Activated naive CD4-positive, alpha-beta T cell treated with anti-CD3 and anti-CD28 coated beads for 36 hours (primary cell): ENCODE measurements at regions of chr3 and their contacts with region 1.

Region 1: DNA sequence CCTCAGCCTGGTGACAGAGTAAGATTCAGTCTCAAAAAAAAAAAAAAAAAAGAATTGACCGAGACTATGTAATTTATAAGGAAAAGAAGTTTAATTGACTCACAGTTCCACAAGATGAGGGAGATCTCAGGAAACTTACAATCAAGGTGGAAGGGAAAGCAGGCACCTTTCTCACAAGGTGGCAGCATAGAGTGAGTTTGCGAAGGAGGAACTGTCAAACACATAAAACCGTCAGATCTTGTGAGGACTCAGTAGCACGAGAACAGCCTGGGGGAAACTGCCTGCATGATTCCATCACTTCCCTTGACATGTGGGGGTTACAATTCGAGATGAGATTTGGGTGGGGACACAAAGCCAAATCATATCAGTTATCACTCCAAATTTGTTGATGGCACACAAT is 381.0 kb downstream of the EDEM1 start:
- DNase-seq: no peak
- H3K4me3 Mint-ChIP-seq: no peak overlapping the region
- H3K27ac Mint-ChIP-seq: no peak overlapping the region
- H3K4me1 Mint-ChIP-seq: no peaks in the 10 kb centered on the region
- H3K27me3 Mint-ChIP-seq: no peaks in the 10 kb centered on the region

Region 2: DNA sequence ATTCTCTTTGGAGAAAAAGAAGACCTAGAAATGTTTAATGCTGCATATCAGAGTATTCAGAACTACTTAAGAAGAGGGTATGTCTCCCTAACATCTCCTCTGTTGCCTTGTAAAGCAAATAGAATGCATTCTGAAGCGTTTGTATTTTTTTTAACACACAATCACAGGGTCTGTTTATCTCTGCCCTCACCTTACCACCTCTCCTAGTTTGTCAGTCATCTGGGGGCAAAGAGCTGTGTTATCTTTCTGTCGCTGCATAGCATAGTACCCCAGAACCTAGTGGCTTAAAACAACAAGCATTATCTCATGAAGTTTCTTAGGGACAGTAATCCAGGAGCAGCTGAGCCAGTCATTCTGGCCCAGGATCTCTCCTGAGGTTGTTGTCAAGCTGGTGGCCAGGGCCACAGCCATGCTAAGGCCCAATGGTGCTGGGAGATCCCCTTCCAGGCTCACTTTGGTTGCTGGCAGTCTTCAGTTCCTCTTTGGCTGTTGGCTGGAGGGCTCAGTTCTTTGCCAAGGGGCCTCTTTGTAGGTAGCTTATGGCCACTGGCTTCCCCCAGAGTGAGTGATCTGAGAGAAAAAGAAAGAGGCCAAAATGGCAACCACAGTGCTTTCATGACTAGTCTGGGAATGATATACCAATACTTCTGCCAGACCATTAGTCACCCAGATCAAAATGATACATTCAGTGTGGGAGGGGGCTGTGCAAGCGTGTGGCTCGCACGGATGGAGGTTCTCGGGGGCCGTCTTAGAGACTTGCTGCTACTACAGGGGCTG is 363.1 kb before region 1 on chr3:
- CTCF ChIA-PET with region 1: no interaction called
- intact Hi-C with region 1: no loop called
- DNase-seq: no peak
- H3K4me3 Mint-ChIP-seq: no peak overlapping the region
- H3K27ac Mint-ChIP-seq: peak overlapping the region; percentile 86
- H3K4me1 Mint-ChIP-seq: peaks cover 29% of the 10 kb centered on the region
- H3K27me3 Mint-ChIP-seq: no peaks in the 10 kb centered on the region

Region 3: DNA sequence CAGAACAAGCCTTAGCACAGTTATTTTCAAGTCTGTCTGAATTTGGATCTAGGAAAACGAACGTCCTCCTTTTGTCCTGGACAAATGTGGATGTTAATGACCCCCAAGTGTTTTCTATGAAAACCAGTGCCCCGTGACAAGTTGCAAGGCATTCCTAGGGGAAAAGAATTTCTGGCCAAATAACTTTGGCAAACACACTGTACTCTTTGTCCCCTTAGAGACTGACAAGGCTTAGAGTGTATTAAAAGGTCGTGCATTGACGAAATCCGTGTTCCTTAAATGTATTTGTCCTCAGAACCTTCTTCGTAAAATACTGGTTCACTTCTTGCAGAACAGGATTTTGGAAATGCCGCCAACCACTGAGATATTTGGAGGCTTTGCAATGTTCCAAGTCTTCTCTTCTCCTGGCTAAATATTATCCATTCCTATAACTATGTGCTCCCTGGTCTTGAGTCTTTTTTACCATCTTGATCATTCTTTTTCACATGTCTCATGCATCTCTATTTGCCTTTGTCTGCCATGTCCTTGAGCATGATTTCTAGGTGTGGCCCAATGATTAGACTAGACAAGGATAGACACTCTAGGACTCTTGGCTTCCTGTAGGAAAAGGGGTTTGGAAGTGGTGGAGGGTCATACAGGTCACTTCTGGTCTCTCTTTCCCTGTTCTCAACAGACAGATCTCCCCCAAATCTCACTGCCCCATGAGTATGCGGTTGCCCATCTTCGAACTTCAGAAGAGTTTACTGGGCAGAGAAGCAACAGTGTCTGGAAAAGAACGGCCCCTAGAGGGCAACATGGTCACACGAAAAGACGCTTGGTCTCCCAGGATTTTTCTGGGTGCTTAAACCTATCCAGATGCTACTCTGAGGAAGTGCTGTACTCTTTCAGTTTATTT is 263.4 kb before region 1 on chr3:
- CTCF ChIA-PET with region 1: no interaction called
- intact Hi-C with region 1: loop called (anchors 10 kb)
- DNase-seq: peak; percentile 70
- H3K4me3 Mint-ChIP-seq: no peak overlapping the region
- H3K27ac Mint-ChIP-seq: no peak overlapping the region
- H3K4me1 Mint-ChIP-seq: no peaks in the 10 kb centered on the region
- H3K27me3 Mint-ChIP-seq: no peaks in the 10 kb centered on the region

Region 4: DNA sequence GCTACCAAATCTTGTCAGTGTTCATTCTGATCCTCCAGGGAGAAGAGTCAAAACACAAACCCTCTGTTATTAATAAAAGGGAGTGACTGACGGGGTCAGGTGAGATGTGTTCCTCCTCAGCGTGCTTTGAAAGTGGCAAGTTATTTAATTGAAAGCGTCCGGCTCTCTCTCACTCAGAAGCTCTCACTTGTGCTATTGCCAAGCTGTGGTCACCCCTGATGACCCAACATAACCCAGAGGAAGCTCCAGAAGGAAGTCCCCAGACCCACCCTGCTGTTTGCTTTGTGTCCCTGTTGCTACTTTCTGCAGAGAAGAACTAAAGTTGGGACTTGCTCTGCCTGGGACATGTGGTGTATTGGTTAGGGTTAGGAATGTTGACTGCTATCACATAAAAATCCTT is 145.4 kb before region 1 on chr3:
- CTCF ChIA-PET with region 1: no interaction called
- intact Hi-C with region 1: no loop called
- DNase-seq: no peak
- H3K4me3 Mint-ChIP-seq: no peak overlapping the region
- H3K27ac Mint-ChIP-seq: no peak overlapping the region
- H3K4me1 Mint-ChIP-seq: peaks cover 8% of the 10 kb centered on the region
- H3K27me3 Mint-ChIP-seq: peaks cover 4% of the 10 kb centered on the region

Region 5: DNA sequence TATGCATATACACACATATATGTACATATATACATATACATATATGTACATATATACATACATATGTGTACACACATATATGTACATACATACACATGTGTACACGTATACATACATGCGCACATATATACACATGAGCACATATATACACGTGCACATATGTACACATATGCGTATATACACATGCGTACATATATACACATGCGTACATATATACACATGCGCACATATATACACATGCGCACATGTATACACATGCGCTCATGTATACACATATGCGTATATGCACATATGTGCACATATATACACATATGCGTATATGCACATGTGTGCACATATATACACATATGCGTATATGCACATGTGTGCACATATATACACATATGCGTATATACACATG is 27.9 kb before region 1 on chr3:
- CTCF ChIA-PET with region 1: no interaction called
- intact Hi-C with region 1: no loop called
- DNase-seq: no peak
- H3K4me3 Mint-ChIP-seq: no peak overlapping the region
- H3K27ac Mint-ChIP-seq: no peak overlapping the region
- H3K4me1 Mint-ChIP-seq: no peaks in the 10 kb centered on the region
- H3K27me3 Mint-ChIP-seq: no peaks in the 10 kb centered on the region

Region 6: GRCh38 chr3:5630406-5630805 is 61.9 kb after region 1 on chr3:
- CTCF ChIA-PET with region 1: no interaction called
- intact Hi-C with region 1: no loop called
- DNase-seq: no peak
- H3K4me3 Mint-ChIP-seq: no peak overlapping the region
- H3K27ac Mint-ChIP-seq: no peak overlapping the region
- H3K4me1 Mint-ChIP-seq: no peaks in the 10 kb centered on the region
- H3K27me3 Mint-ChIP-seq: no peaks in the 10 kb centered on the region